Aorta (tissue), 5 donors: ENCODE measurements at regions of chr2 and their contacts with region 1.

Region 1: DNA sequence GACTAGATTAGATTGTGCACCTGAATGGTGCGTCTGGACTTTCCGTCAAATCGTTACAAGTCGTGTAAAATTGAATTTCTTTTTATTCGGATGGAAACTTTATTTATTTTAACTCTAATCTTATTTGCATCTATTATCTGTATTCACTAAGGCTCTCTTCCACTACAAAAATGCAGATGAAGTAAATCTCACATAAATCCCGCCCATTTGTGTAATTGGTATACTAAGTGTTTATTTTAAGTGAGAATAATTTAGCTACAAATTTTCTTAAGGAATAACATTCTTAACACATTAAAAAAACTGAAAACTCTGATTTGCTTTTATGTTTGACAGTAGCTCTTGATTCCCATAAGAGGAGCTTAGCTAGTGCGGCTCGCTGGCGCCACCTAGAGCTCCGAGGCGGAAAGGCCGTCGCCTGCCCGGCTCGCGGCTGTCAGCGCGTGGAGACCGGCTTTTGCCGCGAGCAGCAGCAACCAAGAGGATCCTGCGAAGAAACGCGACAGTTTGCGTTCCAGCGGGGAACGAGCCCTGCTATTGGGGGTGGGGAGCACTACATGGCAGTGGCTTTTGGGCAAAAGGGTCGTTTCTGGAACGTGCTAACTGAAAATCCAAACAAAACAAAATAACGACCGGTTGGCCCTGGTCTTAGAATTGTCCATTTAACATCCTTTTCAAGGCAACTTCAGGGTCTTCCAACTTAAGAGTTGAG is 6.7 kb downstream of the SP9 start:
- DNase-seq: peak; percentile 89 to 95
- ATAC-seq: peak; percentile 95
- H3K4me3 ChIP-seq: no peak overlapping the region
- H3K27ac ChIP-seq: no peak overlapping the region
- H3K4me1 ChIP-seq: no peaks in the 10 kb centered on the region
- H3K27me3 ChIP-seq: peaks cover 0 to 1% of the 10 kb centered on the region in 2 donors

Region 2: GRCh38 chr2:173571021-173571882 is 770.2 kb before region 1 on chr2:
- intact Hi-C with region 1: loop called in 1 of 2 experiments (anchors 5 kb)
- DNase-seq: no peak
- ATAC-seq: no peak
- H3K4me3 ChIP-seq: no peak overlapping the region
- H3K27ac ChIP-seq: no peak overlapping the region
- H3K4me1 ChIP-seq: no peaks in the 10 kb centered on the region
- H3K27me3 ChIP-seq: no peaks in the 10 kb centered on the region